PC-9 (cell line): ENCODE measurements at regions of chr3 and their contacts with region 1.

Region 1: DNA sequence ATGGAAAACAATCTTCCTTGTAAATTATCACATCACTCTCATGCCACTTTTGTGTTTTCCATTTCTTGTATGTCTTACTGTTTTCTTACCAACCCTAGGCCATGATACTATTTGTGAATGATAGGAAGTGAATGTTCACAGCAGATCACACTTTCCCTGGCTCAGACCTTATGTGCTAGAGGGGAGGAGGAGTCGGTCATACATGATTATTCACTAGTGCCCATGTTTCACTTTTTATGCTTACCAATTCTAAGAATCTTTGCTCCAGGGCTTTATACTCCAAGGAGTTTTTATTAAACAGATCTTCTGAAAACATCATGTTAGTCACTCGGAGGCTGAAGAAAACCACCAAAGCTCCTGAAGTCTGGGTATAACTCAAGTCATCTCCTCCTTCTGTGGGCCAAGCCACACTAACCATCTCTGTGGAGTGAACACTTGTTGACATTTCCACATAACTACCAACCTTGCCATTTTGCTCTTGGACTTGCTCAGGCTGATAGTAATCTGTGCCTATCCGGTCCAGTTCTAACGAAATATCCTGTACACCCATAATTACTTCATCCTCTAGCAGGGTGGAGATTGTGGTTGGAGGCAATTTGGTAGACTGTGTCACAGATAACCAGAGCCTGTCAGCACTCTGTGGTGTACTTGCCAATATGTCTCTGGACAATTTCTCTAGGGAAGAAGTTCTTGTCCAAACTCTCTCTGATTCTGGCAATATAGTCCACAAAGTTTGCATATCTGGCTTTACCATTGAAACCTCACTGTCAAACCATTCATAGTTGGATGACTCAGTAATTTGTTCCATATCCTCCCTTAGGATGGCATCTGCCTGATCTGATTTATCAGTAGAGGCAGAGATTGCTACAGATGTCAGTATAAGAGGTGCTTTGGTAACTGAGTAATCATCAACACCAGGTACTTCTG is 76.8 kb downstream of the IMPG2 start:
- DNase-seq: no peak
- H3K4me3 ChIP-seq: no peak overlapping the region
- H3K27ac ChIP-seq: no peak overlapping the region
- H3K4me1 ChIP-seq: no peaks in the 10 kb centered on the region
- H3K27me3 ChIP-seq: no peaks in the 10 kb centered on the region
- CTCF ChIP-seq: no peak

Region 2: DNA sequence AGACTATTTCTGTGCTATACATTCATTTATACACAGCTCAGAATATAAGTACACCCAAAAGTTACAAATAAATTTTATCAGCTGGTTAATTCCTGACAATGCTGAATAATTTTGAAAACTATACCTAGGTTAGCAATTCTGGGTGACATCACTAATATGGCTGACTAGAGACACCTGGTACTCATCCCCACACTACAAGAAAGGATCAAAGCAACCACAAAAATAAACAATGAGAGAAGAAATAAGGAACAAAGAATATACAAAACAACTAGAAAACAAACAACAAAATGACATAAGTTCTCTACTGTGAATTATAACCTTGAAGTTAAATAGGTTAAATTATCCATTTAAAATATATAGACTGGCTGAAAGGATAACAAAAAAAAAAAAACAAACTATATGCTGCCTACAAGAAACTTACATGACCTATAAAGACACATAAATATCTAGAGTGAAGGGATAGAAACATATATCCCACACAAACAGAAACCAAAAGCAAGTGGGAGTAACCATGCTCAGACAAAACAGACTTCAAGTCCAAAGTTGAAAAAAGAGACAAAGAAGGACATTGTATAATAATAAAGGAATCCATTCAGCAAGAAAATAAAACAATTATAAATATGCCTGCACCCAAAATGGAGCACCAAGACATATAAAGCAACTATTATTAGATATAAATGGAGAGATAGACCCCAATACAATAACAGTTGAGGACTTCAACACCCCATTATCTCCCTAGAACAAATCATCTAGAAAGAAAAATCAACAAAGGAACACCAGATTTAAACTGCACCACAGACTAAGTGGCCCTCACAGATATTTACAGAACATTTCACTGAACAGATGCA is 19.1 kb after region 1 on chr3:
- CTCF ChIA-PET with region 1: no interaction called
- POLR2A ChIA-PET with region 1: no interaction called
- intact Hi-C with region 1: no loop called
- DNase-seq: no peak
- H3K4me3 ChIP-seq: no peak overlapping the region
- H3K27ac ChIP-seq: no peak overlapping the region
- H3K4me1 ChIP-seq: no peaks in the 10 kb centered on the region
- H3K27me3 ChIP-seq: no peaks in the 10 kb centered on the region
- CTCF ChIP-seq: no peak

Region 3: GRCh38 chr3:101279765-101280385 is 36.3 kb after region 1 on chr3:
- CTCF ChIA-PET with region 1: no interaction called
- POLR2A ChIA-PET with region 1: interaction called, 13 read pairs
- intact Hi-C with region 1: no loop called
- DNase-seq: no peak
- H3K4me3 ChIP-seq: no peak overlapping the region
- H3K27ac ChIP-seq: no peak overlapping the region
- H3K4me1 ChIP-seq: no peaks in the 10 kb centered on the region
- H3K27me3 ChIP-seq: no peaks in the 10 kb centered on the region
- CTCF ChIP-seq: no peak